ENCODE measurements at regions of chr6 and their contacts with region 1.

Region 1: GRCh38 chr6:156752666-156753301 is 24.4 kb upstream of the ARID1B start:
- DNase-seq: peak; percentile 63
- ATAC-seq: peak; percentile 94
- H3K4me3 ChIP-seq: no peak overlapping the region
- H3K27ac ChIP-seq: no peak overlapping the region
- H3K4me1 ChIP-seq: peaks cover 25% of the 10 kb centered on the region
- H3K27me3 ChIP-seq: no peaks in the 10 kb centered on the region
- CTCF ChIP-seq: peak; percentile 40 to 67 (median 43); a peak in 5 of 6 replicates
- EP300 ChIP-seq: peak in 1 of 2 experiments; percentile 53; a peak in 1 of 4 replicates
- POLR2A ChIP-seq: no peak
- RAD21 ChIP-seq: no peak; the same call in 1 of the 2 replicates

Region 2: DNA sequence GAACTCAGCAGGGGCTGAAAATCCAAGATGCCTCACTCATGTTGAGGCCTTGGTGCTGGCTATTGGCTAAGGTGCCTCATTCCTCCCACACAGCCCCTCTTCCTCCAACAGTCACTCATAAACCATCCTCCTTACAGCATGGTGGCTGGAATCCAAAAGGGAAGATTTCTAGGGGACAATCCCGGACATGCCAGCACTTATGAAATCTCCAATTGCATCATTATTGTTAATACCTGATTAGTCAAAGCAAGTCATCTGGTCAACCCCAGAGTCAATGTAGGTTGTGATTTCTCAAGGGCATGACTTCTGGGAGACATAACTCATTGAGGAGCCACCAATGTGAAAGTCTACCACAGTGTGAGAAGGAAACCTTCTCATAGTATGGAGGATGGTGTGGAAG is 790.5 kb before region 1 on chr6:
- CTCF ChIA-PET with region 1: no interaction called
- POLR2A ChIA-PET with region 1: no interaction called
- RAD21 ChIA-PET with region 1: no interaction called
- SMC1A ChIA-PET with region 1: no interaction called
- in situ Hi-C with region 1: no loop called
- intact Hi-C with region 1: no loop called
- DNase-seq: no peak
- ATAC-seq: no peak
- H3K4me3 ChIP-seq: no peak overlapping the region
- H3K27ac ChIP-seq: no peak overlapping the region
- H3K4me1 ChIP-seq: no peaks in the 10 kb centered on the region
- H3K27me3 ChIP-seq: no peaks in the 10 kb centered on the region
- CTCF ChIP-seq: no peak
- EP300 ChIP-seq: no peak
- POLR2A ChIP-seq: no peak
- RAD21 ChIP-seq: no peak

Region 3: GRCh38 chr6:156554160-156554559 is 198.6 kb before region 1 on chr6:
- CTCF ChIA-PET with region 1: no interaction called
- POLR2A ChIA-PET with region 1: no interaction called
- RAD21 ChIA-PET with region 1: no interaction called
- SMC1A ChIA-PET with region 1: no interaction called
- in situ Hi-C with region 1: no loop called
- intact Hi-C with region 1: no loop called
- DNase-seq: no peak
- ATAC-seq: no peak
- H3K4me3 ChIP-seq: no peak overlapping the region
- H3K27ac ChIP-seq: no peak overlapping the region
- H3K4me1 ChIP-seq: peaks cover 3% of the 10 kb centered on the region; the same call in 1 of the 2 replicates
- H3K27me3 ChIP-seq: no peaks in the 10 kb centered on the region
- CTCF ChIP-seq: no peak
- EP300 ChIP-seq: no peak
- POLR2A ChIP-seq: no peak
- RAD21 ChIP-seq: no peak

Region 4: DNA sequence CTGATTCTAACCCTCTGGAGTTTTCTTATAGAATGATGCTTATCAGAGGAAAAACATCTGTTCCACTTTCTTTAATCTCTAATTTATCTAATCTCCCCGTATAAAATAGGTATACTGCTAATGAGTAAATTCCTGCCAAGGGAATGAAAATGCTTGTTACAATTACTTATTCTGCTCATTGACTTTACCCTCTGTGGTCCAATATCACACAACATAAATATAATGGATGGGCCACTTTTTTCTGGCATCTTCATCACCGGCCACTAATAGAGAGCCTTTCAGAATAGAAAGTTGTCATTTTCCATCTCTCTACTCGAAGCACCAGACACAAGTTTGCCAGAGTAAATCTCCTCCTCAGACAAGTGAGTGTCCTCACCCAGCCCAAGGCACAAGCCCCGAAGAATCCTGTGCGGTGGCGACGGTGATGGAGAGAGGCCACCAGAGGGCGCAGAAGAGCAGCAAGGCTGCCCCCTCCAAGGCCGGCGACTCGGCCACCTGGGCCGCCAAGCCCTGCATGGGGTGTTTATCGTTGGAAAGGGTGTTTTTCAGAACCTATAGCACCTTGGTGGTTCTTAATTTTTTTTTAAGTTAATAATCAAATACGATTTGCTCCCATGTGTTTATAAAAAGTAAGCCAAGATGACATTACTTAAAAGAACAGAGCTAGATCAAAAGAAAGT is 188.5 kb before region 1 on chr6:
- CTCF ChIA-PET with region 1: interaction called, 21 read pairs
- POLR2A ChIA-PET with region 1: no interaction called
- RAD21 ChIA-PET with region 1: interaction called, 5 read pairs
- SMC1A ChIA-PET with region 1: interaction called, 35 read pairs
- in situ Hi-C with region 1: no loop called
- intact Hi-C with region 1: no loop called
- DNase-seq: peak; percentile 46
- ATAC-seq: peak; percentile 100
- H3K4me3 ChIP-seq: no peak overlapping the region
- H3K27ac ChIP-seq: no peak overlapping the region
- H3K4me1 ChIP-seq: no peaks in the 10 kb centered on the region
- H3K27me3 ChIP-seq: no peaks in the 10 kb centered on the region; a peak in 1 of 4 replicates
- CTCF ChIP-seq: peak; percentile 91 to 94 (median 93)
- EP300 ChIP-seq: no peak
- POLR2A ChIP-seq: no peak
- RAD21 ChIP-seq: peak; percentile 97

Region 5: DNA sequence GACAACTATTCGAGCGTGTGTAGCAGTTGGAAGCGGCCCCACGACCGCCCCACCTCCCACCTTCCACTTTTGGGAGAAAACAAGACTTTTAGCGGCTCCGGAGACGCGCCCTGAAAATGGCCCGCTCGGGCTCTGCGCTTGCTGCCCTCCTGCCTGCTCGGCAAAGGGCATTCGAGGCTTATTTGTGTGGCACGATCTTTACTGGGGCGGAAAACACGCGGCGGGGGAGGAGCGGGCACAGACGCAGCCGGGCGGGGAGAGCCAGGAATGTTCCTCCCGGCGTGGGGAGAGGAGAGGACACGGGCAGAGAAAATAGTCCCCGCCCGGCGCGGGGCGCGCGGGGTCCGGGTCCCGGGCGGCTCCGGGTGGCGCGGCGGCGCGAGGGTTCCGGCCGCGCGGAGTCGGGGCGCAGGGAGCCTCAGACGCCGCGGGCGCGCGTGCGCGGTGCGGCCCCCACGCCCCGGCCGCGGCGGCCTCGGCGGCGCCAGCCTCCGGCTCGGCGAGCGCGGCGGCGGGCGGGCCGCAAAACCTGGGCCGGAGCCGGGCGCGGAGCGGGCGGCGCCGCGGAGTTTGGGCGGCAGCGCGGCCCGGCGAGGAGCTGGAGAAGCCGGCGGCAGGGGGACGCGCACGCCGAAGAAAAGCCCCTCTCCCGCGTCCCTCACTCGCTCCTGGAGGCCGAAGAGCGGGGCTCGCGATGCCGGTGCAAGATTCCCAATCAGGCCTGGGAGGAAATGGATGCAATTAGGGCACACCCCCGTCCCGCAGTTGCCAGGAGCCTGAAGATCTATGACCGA is 65.6 kb before region 1 on chr6:
- CTCF ChIA-PET with region 1: interaction called, 15 read pairs
- POLR2A ChIA-PET with region 1: interaction called, 7 read pairs
- RAD21 ChIA-PET with region 1: interaction called, 14 read pairs
- SMC1A ChIA-PET with region 1: interaction called, 46 read pairs
- in situ Hi-C with region 1: no loop called
- intact Hi-C with region 1: no loop called
- DNase-seq: no peak
- ATAC-seq: peak; percentile 69
- H3K4me3 ChIP-seq: peak overlapping the region; percentile 93
- H3K27ac ChIP-seq: peak overlapping the region; percentile 98
- H3K4me1 ChIP-seq: peaks cover 48% of the 10 kb centered on the region
- H3K27me3 ChIP-seq: no peaks in the 10 kb centered on the region
- CTCF ChIP-seq: no peak
- EP300 ChIP-seq: peak in 1 of 2 experiments; percentile 27; a peak in 1 of 4 replicates
- POLR2A ChIP-seq: peak; percentile 85
- RAD21 ChIP-seq: no peak; the same call in 1 of the 2 replicates

Region 6: GRCh38 chr6:156729248-156729647 is 23.5 kb before region 1 on chr6:
- CTCF ChIA-PET with region 1: interaction called, 24 read pairs
- POLR2A ChIA-PET with region 1: interaction called, 15 read pairs
- RAD21 ChIA-PET with region 1: interaction called, 119 read pairs
- SMC1A ChIA-PET with region 1: interaction called, 39 read pairs
- in situ Hi-C with region 1: no loop called
- intact Hi-C with region 1: no loop called
- DNase-seq: peak; percentile 36
- ATAC-seq: peak; percentile 94
- H3K4me3 ChIP-seq: no peak overlapping the region
- H3K27ac ChIP-seq: no peak overlapping the region
- H3K4me1 ChIP-seq: peaks cover 2% of the 10 kb centered on the region; the same call in 1 of the 2 replicates
- H3K27me3 ChIP-seq: no peaks in the 10 kb centered on the region
- CTCF ChIP-seq: no peak
- EP300 ChIP-seq: no peak
- POLR2A ChIP-seq: no peak
- RAD21 ChIP-seq: no peak

Region 7: GRCh38 chr6:156767603-156768467 is 15.1 kb after region 1 on chr6:
- CTCF ChIA-PET with region 1: interaction called, 14 read pairs
- POLR2A ChIA-PET with region 1: interaction called, 26 read pairs
- RAD21 ChIA-PET with region 1: interaction called, 59 read pairs
- SMC1A ChIA-PET with region 1: interaction called, 100 read pairs
- in situ Hi-C with region 1: no loop called
- intact Hi-C with region 1: no loop called
- DNase-seq: peak; percentile 90
- ATAC-seq: peak; percentile 96
- H3K4me3 ChIP-seq: peak overlapping the region; percentile 56; the same call in 1 of the 2 replicates
- H3K27ac ChIP-seq: peak overlapping the region; percentile 63
- H3K4me1 ChIP-seq: peaks cover 19% of the 10 kb centered on the region
- H3K27me3 ChIP-seq: no peaks in the 10 kb centered on the region
- CTCF ChIP-seq: no peak
- EP300 ChIP-seq: peak; percentile 20 to 54; a peak in 3 of 4 replicates
- POLR2A ChIP-seq: no peak
- RAD21 ChIP-seq: 0 out of 2 replicates have a peak, but pooled peaks have one; percentile 15

Region 8: GRCh38 chr6:156781861-156782631 is 29.3 kb after region 1 on chr6:
- CTCF ChIA-PET with region 1: interaction called, 3 read pairs
- POLR2A ChIA-PET with region 1: interaction called, 10 read pairs
- RAD21 ChIA-PET with region 1: interaction called, 10 read pairs
- SMC1A ChIA-PET with region 1: interaction called, 11 read pairs
- in situ Hi-C with region 1: no loop called
- intact Hi-C with region 1: loop called (anchors 2 kb)
- DNase-seq: no peak
- ATAC-seq: no peak
- H3K4me3 ChIP-seq: peak overlapping the region; percentile 89
- H3K27ac ChIP-seq: peak overlapping the region; percentile 93
- H3K4me1 ChIP-seq: peaks cover 6% of the 10 kb centered on the region; the same call in 1 of the 2 replicates
- H3K27me3 ChIP-seq: no peaks in the 10 kb centered on the region
- CTCF ChIP-seq: no peak
- EP300 ChIP-seq: no peak
- POLR2A ChIP-seq: no peak
- RAD21 ChIP-seq: no peak

Measured in GM12878 (cell line).